HAP-1 (cell line): ENCODE measurements at regions of chr5 and their contacts with region 1.

Region 1: DNA sequence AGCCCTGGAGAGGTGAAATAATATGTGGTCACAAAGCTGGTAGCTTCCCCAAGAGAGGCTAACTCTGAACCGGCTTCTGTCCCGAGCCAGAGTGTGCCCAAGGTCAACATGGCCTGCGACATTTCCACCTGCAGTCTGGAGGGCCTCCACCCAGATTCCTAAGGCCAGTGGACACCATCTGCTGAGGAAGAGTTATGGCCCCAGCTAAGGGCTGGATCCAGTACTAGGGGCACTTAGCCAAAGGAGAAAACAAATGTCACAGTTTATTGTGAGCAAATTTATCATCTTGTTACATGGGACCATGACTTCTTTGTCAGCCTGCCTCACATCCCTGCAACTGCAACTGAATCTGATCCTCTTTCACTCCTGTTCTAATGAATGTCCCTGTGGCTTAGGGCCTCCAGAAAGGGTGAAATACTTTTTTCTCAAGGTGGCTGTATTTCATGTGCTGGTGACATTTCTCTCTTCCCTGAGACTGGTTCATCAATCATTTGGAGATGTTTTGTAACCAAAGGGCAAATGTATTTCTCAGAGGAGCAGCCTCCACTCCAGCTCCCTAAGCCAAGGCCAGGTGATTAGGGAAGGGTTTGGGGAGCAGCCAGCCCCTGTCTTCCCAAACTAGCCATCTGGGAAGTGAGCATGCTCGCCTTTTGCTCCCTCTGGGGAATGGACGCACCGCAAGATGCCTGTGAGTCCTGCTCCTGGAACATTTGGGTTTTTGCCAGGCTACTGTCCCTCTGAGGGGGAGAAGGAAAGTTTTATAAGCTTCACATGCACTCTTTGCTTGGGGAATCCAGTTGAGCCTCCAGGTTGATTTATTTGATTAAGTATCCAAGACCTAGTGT is 148.3 kb downstream of the CMYA5 start:
- DNase-seq: no peak
- H3K4me3 ChIP-seq: no peak overlapping the region
- H3K4me1 ChIP-seq: no peaks in the 10 kb centered on the region
- H3K27me3 ChIP-seq: no peaks in the 10 kb centered on the region

Region 2: GRCh38 chr5:79560771-79561524 is 277.0 kb before region 1 on chr5:
- in situ Hi-C with region 1: loop called (anchors 10 kb)
- DNase-seq: no peak
- H3K4me3 ChIP-seq: no peak overlapping the region
- H3K4me1 ChIP-seq: peaks cover 29% of the 10 kb centered on the region
- H3K27me3 ChIP-seq: no peaks in the 10 kb centered on the region; the same call in 1 of the 2 replicates